Naive thymus-derived CD4-positive, alpha-beta T cell (primary cell): ENCODE measurements at regions of chr5 and their contacts with region 1.

Region 1: DNA sequence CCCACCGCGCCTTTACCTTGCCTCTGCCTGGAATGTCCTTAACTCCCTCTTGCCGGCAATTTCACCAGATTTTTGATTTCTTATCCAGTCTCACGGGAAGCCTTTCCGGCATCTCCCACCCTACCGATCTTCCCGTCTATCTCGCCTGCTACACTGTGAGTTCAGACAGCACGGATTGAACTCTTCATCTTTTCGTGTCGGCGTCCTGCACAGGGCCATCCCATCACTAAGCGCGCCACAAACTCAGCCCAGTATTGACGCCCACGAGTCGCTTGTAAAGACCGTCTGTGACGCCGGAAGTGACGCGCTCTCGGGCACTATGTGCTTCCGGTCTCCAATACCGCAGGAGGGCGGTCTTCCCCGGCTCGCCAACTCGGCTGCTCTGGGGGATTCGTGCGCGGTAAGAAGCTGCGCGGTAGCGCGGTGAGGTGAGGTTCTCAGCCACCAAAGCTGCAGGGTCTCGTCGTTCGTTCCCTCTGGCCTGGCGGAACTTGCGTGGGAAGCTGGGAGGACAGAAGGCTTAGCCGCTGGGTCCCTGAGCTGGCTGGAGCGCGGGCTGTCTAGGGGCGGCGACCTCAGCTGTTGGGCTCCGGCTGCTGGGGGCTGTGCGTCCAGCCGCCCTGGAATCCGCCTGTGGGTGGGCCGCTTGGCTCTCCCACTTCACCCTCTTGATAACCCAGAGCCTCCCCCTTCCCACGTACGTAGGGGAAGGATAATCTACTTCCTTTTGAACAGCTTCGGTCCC is at the start of gene ZCCHC9:
- DNase-seq: peak; percentile 84 to 94 (median 90)
- ATAC-seq: peak; percentile 96
- H3K4me3 ChIP-seq: peak within 1 kb of the TSS; percentile 75
- H3K4me3 Mint-ChIP-seq: peak within 1 kb of the TSS; percentile 91 to 99 (median 96)
- H3K27ac ChIP-seq: peak within 1 kb of the TSS; percentile 96
- H3K27ac Mint-ChIP-seq: peak within 1 kb of the TSS; percentile 92 to 99 (median 98)
- H3K4me1 ChIP-seq: peaks cover 14 to 21% of the 10 kb centered on the region in 2 donors
- H3K4me1 Mint-ChIP-seq: peaks cover 34 to 73% (median 55%) of the 10 kb centered on the region in 7 donors
- H3K27me3 ChIP-seq: no peaks in the 10 kb centered on the region
- H3K27me3 Mint-ChIP-seq: no peaks in the 10 kb centered on the region
- total RNA-seq, gene ZCCHC9: 15.5 to 35.1 (median 27.5) TPM

Region 2: DNA sequence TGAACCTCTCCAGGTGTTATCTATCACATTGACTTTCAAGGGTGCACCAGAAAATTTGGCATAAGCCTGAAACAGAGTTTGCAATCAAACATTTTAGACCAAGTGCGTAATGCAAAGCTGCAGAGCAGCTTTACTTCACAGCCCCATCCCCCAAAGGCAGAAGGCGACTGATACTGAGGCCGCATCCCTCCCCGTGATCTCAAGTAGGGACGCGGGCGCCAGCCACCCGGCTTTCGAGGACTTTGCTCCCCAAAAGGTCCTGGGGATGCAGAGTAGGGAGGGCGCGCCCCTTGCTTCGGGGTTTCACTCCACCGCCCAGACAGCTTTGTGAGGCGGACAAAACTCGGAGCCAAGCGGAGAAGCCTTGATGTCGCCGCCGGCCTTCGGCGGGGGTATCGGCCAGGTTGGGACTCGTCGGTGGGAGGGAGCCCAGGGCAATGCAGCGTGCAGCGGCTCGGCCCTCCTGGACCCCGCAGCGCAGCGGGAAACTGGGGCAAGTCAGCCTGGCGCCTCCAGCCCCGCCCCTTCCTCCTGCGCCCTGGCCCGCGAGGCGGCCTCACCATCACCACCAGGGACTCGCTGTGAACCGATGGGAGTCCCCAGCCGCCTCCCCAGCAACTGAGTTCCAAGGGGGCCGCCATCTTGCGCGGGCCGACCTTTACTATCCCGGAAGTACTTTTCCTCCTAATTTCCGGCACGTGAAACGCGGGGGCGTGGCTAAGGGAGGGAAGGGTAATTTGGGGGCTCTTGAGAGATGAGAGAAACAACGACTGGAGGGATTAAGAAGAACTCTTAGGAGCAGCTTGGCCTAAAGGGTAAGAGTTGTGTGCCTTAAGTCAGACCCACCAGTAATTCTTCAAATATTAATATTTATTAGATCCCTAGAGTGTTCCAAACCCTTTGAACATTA is 1310.6 kb before region 1 on chr5 and contains the start of gene MTX3:
- CTCF ChIA-PET with region 1: no interaction called
- POLR2A ChIA-PET with region 1: no interaction called
- intact Hi-C with region 1: loop called in 1 of 2 experiments (anchors 10 kb)
- DNase-seq: peak; percentile 65 to 85 (median 82)
- ATAC-seq: peak; percentile 97
- H3K4me3 ChIP-seq: peak within 1 kb of the TSS; percentile 80
- H3K4me3 Mint-ChIP-seq: peak within 1 kb of the TSS; percentile 76 to 93 (median 88)
- H3K27ac ChIP-seq: peak within 1 kb of the TSS; percentile 75
- H3K27ac Mint-ChIP-seq: peak within 1 kb of the TSS; percentile 82 to 95 (median 92)
- H3K4me1 ChIP-seq: peaks cover 17 to 18% of the 10 kb centered on the region in 2 donors
- H3K4me1 Mint-ChIP-seq: peaks cover 17 to 47% (median 36%) of the 10 kb centered on the region in 7 donors
- H3K27me3 ChIP-seq: no peaks in the 10 kb centered on the region
- H3K27me3 Mint-ChIP-seq: peaks cover 0 to 13% (median 8%) of the 10 kb centered on the region in 5 donors
- total RNA-seq, gene MTX3: 12.9 to 31.0 (median 24.4) TPM

Region 3: DNA sequence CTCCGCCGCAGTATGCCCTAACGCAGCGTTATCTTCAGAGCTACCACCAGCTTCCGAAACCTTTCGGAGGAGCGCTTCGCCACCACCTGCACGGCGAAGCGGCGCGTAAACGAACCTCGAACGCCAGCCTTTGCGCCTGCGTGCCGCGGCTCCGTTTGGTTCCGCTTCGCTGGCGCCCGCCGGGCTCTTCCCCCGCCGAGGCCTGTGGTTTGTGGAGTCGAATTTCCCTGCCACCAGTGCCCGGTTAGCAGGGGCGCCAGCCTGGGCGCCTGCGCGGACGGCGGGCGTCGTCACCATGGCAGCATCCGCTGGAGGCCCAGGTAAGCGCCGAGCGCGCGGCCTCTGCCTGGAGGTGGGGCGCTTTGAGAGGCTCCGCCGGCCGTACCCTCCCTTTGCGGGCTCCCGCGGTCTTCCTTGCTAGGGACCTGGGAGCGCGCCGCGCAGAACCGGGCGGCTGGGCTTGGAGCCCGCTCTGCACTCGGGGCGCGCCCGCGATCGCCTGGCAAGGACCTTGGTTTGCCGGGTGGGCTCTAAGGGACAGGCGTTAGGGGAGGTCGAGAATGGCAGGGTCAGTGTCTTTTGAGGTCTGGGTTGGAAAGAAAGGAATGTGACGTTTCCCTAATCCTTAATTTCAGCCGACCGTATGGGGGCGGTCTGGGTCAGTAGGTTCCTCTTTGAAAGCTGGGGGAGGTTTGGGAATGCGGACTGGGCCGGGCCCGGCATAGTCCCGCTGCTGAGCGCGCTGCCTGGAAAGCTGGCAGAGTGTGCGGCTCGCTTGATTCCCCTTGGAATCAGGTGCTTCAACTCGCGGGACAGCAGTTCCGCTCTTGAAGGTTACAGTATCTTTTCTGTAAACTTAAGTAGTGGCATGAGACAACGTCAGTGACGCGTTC is 813.4 kb before region 1 on chr5 and contains the start of gene FAM151B:
- CTCF ChIA-PET with region 1: no interaction called
- POLR2A ChIA-PET with region 1: no interaction called
- intact Hi-C with region 1: loop called in 1 of 2 experiments (anchors 2 kb)
- DNase-seq: peak; percentile 58 to 86 (median 79)
- ATAC-seq: peak; percentile 90
- H3K4me3 ChIP-seq: peak within 1 kb of the TSS; percentile 71
- H3K4me3 Mint-ChIP-seq: peak within 1 kb of the TSS; percentile 83 to 92 (median 88)
- H3K27ac ChIP-seq: peak within 1 kb of the TSS; percentile 52
- H3K27ac Mint-ChIP-seq: peak within 1 kb of the TSS; percentile 47 to 88 (median 72)
- H3K4me1 ChIP-seq: peaks cover 0 to 7% of the 10 kb centered on the region in 2 donors
- H3K4me1 Mint-ChIP-seq: peaks cover 9 to 27% (median 14%) of the 10 kb centered on the region in 7 donors
- H3K27me3 ChIP-seq: no peaks in the 10 kb centered on the region
- H3K27me3 Mint-ChIP-seq: peaks cover 0 to 36% (median 7%) of the 10 kb centered on the region in 5 donors
- total RNA-seq, gene FAM151B: 0.36 to 3.4 (median 1.1) TPM in 4 of 5 experiments, not detected in the other

Region 4: GRCh38 chr5:81194633-81195333 is 106.7 kb before region 1 on chr5:
- CTCF ChIA-PET with region 1: interaction called, 7 read pairs
- POLR2A ChIA-PET with region 1: no interaction called
- intact Hi-C with region 1: loop called (anchors 2 kb)
- DNase-seq: peak; percentile 58 to 83 (median 74)
- ATAC-seq: peak; percentile 98
- H3K4me3 ChIP-seq: no peak overlapping the region
- H3K4me3 Mint-ChIP-seq: peak overlapping the region in 8 of 10 donors; percentile 21 to 65 (median 47)
- H3K27ac ChIP-seq: no peak overlapping the region
- H3K27ac Mint-ChIP-seq: peak overlapping the region in 7 of 9 donors; percentile 21 to 82 (median 68)
- H3K4me1 ChIP-seq: peaks cover 0 to 6% of the 10 kb centered on the region in 2 donors
- H3K4me1 Mint-ChIP-seq: peaks cover 3 to 16% (median 9%) of the 10 kb centered on the region in 7 donors
- H3K27me3 ChIP-seq: no peaks in the 10 kb centered on the region
- H3K27me3 Mint-ChIP-seq: no peaks in the 10 kb centered on the region

Region 5: DNA sequence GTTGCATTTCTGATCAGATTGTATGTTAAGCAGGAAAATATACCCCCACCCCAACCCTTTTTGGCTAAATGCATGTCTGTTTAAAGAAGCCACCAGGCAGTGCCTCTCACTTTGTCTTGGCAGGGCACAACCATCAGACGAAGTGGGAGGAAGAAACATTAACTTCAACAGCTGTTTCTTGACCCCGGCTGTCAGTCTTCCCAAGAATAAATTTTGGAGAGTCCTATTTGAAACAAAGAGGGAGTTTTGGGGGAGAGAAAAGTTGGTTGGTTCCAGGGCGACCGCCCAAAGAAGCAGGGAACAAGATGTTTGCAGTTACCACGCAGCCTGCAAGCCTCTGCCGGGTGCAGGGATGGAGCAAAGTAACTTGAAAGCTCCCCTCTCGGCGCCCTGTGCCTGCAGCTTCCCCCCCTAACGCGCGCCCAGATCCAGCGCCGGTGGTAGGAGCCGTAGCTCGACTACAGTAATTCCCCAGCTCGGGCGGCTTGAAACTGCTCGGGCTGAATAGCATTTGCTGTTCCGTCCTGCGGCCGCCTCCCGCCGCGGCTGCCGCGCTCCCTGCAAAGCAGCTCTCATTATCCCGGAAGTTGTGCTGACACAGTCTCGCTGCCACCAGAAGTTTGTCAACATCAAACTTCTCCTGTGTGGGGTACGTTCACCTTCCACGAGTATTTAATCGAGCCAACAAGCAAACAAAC is 550.2 kb after region 1 on chr5:
- CTCF ChIA-PET with region 1: no interaction called
- POLR2A ChIA-PET with region 1: no interaction called
- intact Hi-C with region 1: loop called (anchors 1 to 5 kb)
- DNase-seq: peak; percentile 76 to 92 (median 89)
- ATAC-seq: peak; percentile 95
- H3K4me3 ChIP-seq: peak overlapping the region; percentile 82
- H3K4me3 Mint-ChIP-seq: peak overlapping the region; percentile 92 to 98 (median 94)
- H3K27ac ChIP-seq: peak overlapping the region; percentile 71
- H3K27ac Mint-ChIP-seq: peak overlapping the region; percentile 96 to 100 (median 97)
- H3K4me1 ChIP-seq: peaks cover 18 to 22% of the 10 kb centered on the region in 2 donors
- H3K4me1 Mint-ChIP-seq: peaks cover 23 to 71% (median 56%) of the 10 kb centered on the region in 7 donors
- H3K27me3 ChIP-seq: no peaks in the 10 kb centered on the region
- H3K27me3 Mint-ChIP-seq: no peaks in the 10 kb centered on the region

Region 6: GRCh38 chr5:82278095-82278918 is 976.9 kb after region 1 on chr5 and contains the start of gene RPS23:
- CTCF ChIA-PET with region 1: no interaction called
- POLR2A ChIA-PET with region 1: interaction called, 3 read pairs
- intact Hi-C with region 1: loop called (anchors 1 kb)
- DNase-seq: peak; percentile 78 to 90 (median 85)
- ATAC-seq: peak; percentile 96
- H3K4me3 ChIP-seq: peak within 1 kb of the TSS; percentile 72
- H3K4me3 Mint-ChIP-seq: peak within 1 kb of the TSS; percentile 87 to 98 (median 94)
- H3K27ac ChIP-seq: peak within 1 kb of the TSS; percentile 80
- H3K27ac Mint-ChIP-seq: peak within 1 kb of the TSS; percentile 94 to 99 (median 96)
- H3K4me1 ChIP-seq: peaks cover 12 to 16% of the 10 kb centered on the region in 2 donors
- H3K4me1 Mint-ChIP-seq: peaks cover 13 to 65% (median 39%) of the 10 kb centered on the region in 7 donors
- H3K27me3 ChIP-seq: no peaks in the 10 kb centered on the region
- H3K27me3 Mint-ChIP-seq: no peaks in the 10 kb centered on the region
- total RNA-seq, gene RPS23: 2,233 to 4,335 (median 3,874) TPM